GM13976 (cell line): ENCODE measurements at regions of chr16 and their contacts with region 1.

Region 1: GRCh38 chr16:57167953-57168352 is 17.9 kb downstream of the PSME3IP1 start:
- DNase-seq: peak; percentile 59
- CTCF ChIP-seq: peak; percentile 70

Region 2: GRCh38 chr16:56866943-56867830 is 300.8 kb before region 1 on chr16:
- in situ Hi-C with region 1: no loop called
- DNase-seq: peak; percentile 81
- CTCF ChIP-seq: peak; percentile 46

Region 3: GRCh38 chr16:57091975-57092785 is 75.8 kb before region 1 on chr16 and contains the start of gene CPNE2:
- in situ Hi-C with region 1: loop called (anchors 10 kb)
- DNase-seq: peak; percentile 84
- CTCF ChIP-seq: no peak